ENCODE measurements at regions of chr17 and their contacts with region 1.

Region 1: GRCh38 chr17:43576563-43577229 is 30.6 kb upstream of the ETV4 start:
- H3K4me3 ChIP-seq: no peak overlapping the region
- H3K27ac ChIP-seq: no peak overlapping the region
- H3K4me1 ChIP-seq: peaks cover 14% of the 10 kb centered on the region
- CTCF ChIP-seq: peak; percentile 81

Region 2: DNA sequence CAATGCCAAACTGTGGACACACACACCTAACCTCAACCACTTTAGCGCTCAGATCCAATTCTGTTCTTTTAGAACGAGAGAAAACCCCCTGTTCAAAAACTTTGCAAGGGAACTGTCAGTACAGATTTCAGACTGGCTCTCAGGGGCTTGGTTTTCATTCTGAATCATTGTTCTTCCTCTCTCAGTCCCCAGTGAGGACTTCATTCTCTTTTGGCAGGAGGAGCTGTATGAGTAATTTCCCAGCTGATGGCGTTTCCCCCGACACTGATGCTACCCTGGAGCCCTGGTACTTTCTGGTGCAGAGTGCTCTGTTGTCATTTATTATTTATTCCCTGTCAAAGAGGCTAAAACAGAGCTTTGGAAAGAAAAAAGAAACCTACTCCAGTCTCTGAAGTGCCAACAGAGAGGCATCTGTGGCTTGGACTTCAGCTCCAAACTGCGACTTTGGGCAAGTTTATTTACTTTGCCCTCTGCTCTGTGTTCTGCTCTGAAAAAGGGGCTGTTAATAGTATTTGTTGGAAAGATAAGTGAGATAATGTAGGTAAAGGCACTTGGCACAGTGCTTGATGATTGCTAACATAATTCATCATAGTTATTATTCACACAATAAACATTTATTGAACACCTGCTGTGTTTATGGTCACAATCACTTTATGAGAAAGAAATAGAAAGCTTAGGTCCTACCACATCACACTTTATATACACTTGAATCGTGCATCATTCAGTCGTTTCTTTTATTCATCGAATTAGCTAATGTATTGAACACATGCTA is 58.9 kb before region 1 on chr17:
- CTCF ChIA-PET with region 1: interaction called, 55 read pairs
- POLR2A ChIA-PET with region 1: no interaction called
- H3K4me3 ChIP-seq: no peak overlapping the region
- H3K27ac ChIP-seq: peak overlapping the region; percentile 29; the same call in 1 of the 2 replicates
- H3K4me1 ChIP-seq: peaks cover 15% of the 10 kb centered on the region
- CTCF ChIP-seq: no peak

Region 3: GRCh38 chr17:43546319-43547188 is 30.1 kb before region 1 on chr17 and contains the start of gene ETV4:
- CTCF ChIA-PET with region 1: interaction called, 13 read pairs
- POLR2A ChIA-PET with region 1: interaction called, 4 read pairs
- H3K4me3 ChIP-seq: peak within 1 kb of the TSS; percentile 36
- H3K27ac ChIP-seq: peak within 1 kb of the TSS; percentile 52; the same call in 1 of the 2 replicates
- H3K4me1 ChIP-seq: peaks cover 17% of the 10 kb centered on the region
- CTCF ChIP-seq: no peak

Region 4: GRCh38 chr17:43604549-43604948 is 27.9 kb after region 1 on chr17:
- CTCF ChIA-PET with region 1: interaction called, 21 read pairs
- POLR2A ChIA-PET with region 1: no interaction called
- H3K4me3 ChIP-seq: no peak overlapping the region
- H3K27ac ChIP-seq: no peak overlapping the region
- H3K4me1 ChIP-seq: peaks cover 4% of the 10 kb centered on the region
- CTCF ChIP-seq: no peak

Region 5: GRCh38 chr17:43673516-43674323 is 97.0 kb after region 1 on chr17:
- CTCF ChIA-PET with region 1: no interaction called
- POLR2A ChIA-PET with region 1: interaction called, 16 read pairs
- H3K4me3 ChIP-seq: no peak overlapping the region
- H3K27ac ChIP-seq: no peak overlapping the region
- H3K4me1 ChIP-seq: peaks cover 38% of the 10 kb centered on the region
- CTCF ChIP-seq: peak; percentile 60; the same call in 1 of the 2 replicates

Region 6: DNA sequence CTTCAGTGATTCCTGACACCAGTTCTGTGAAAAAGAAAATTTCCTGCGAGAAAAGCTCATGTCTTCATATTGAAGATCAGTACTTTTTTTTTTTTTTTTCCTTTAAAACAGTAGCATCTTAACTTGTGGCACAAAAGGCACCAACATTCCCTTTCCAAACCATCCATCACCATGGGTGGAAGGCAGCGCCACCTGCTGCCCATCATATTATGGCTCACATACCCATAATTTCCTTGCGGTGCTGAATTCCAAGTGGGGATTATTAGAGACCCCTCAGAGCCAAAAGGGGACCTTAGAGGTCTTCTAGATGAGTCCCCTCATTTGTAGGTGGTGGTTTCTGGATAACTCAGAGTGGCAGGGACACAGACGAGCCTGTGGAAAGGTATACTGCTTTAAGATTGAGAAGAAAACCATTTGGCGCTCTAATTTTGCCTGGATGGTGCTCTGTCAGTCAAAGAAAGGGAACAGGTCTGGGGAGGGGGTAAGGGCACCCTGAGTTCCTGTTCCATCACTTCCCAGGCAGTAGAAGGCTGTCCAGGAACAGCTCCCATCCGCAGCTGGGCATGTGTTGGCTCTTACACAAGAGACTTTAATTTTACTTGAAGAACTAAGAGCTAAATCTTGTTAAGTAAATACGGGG is 189.8 kb after region 1 on chr17:
- CTCF ChIA-PET with region 1: interaction called, 132 read pairs
- POLR2A ChIA-PET with region 1: interaction called, 4 read pairs
- H3K4me3 ChIP-seq: no peak overlapping the region
- H3K27ac ChIP-seq: no peak overlapping the region
- H3K4me1 ChIP-seq: no peaks in the 10 kb centered on the region
- CTCF ChIP-seq: peak; percentile 32; the same call in 1 of the 2 replicates

Region 7: GRCh38 chr17:44424828-44425461 is 848.2 kb after region 1 on chr17:
- CTCF ChIA-PET with region 1: no interaction called
- POLR2A ChIA-PET with region 1: no interaction called
- H3K4me3 ChIP-seq: no peak overlapping the region
- H3K27ac ChIP-seq: no peak overlapping the region
- H3K4me1 ChIP-seq: no peaks in the 10 kb centered on the region
- CTCF ChIP-seq: no peak

Measured in HEK293 (cell line).